ENCODE measurements at regions of chrX and their contacts with region 1.

Region 1: DNA sequence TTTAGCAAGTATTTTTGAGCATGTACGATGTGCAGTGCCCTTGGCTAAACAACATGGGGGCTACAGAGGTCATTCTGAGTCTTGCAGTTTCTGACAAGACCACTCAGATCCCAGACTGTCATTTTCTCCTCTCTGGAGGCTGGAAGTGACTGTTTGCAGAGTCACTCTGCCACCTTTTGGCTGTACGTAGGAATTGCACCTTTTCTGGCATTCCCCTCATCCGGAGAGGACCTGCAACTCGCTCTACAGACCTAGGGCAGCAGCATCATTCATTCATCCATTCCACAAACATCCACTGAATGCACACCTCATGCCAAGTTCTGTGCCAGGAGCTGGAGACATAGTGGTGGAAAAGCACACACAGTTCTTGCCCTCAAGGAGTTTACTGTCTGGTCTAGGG is 160.4 kb upstream of the GPR101 start:
- DNase-seq: peak; percentile 76

Region 2: DNA sequence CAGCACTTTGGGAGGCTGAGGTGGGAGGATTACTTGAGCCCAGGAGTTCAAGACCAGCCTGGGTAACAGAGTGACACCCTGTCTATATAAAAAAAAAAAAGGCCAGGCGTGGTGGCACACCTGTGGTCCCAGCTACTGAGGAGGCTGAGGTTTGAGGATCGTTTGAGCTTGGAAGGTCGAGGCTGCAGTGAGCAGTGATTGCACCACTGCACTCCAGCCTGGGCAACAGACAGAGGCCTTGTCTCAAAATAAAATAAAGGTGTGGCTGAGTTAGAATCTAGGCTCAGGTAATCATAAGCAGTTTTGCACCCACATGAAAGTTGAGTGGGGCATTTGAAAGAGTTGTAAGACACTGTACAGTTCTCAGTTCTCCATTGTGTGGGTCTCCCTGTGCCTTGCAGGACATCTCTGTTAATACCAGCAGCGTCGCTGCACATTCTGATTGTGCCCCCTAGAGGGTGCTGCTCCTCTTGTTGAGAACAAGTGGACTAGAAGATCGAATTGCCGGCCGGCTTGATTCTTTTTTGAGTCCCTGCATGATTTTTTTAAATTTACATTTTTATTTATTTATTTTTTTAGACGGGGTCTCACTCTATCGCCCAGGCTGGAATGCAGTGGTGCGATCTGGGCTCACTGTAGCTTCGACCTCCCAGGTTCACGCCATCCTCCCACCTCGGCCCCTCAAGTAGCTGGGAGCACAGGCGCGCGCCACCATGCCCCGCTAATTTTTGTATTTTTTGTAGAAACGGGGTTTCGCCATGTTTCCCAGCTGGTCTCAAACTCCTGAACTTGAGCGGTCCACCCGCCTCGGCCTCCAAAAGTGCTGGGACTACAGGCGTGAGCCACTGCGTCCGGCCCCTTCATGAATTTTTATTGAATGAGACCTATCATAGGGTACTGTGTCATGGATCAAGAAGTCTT is 240.0 kb before region 1 on chrX:
- in situ Hi-C with region 1: loop called (anchors 25 kb)
- DNase-seq: peak; percentile 77

Measured in KBM-7 (cell line).